ENCODE measurements at regions of chr22 and their contacts with region 1.

Region 1: DNA sequence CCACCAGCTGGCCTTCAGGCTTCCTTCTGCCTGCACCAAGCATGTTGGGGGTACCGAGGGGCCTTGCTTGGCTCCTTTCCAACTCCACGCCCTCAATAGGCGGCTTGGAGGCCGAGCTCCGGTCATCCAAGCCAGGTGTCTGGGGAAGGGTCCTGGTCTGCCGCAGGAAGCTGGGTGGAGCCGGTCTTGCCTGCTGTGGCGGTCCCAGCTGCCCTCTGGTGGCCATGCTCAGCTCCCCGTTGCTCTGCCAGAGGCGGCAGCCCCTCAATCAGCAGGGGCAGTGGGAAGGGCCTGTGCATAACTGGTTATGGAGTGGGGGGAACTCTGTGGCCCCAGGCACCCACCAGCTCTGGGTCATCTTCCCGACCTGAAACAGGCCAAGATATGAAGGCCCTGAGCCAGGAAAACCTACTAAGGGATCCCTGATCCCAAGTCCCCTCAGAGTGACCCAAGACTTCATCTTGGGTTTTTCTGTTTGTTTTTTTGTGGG is 3.2 kb downstream of the ARVCF start:
- H3K4me3 ChIP-seq: no peak overlapping the region
- H3K27ac ChIP-seq: no peak overlapping the region
- H3K4me1 ChIP-seq: no peaks in the 10 kb centered on the region
- CTCF ChIP-seq: peak; percentile 86

Region 2: DNA sequence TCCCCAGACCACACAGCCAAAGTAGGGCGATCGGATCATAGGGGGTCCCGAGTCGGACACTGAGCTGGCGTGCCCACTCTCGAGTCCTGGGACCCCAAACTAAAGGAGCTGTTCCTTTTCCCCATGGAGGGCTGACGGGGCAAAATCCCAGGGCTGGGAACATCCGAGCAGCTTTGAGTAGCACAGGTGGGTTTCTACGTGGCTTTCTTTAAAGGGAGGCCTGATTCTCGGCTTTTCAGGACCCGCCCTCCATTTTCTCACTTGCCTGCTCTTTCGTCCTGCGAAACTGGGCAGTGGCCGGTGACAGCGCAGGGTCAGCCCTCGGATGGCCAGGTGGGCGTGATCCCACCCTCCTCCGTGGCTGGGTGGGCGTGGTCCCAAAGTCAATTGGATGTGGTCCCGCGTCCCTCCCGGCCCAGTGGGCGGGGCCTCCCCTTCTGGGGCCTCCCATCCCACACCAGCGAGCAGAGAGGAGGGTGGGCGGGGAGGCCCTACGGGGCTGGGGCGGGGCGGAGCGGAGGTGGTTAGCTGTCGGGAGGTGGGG is 54.3 kb before region 1 on chr22:
- CTCF ChIA-PET with region 1: interaction called, 150 read pairs
- POLR2A ChIA-PET with region 1: no interaction called
- H3K4me3 ChIP-seq: peak overlapping the region; percentile 33
- H3K27ac ChIP-seq: no peak overlapping the region
- H3K4me1 ChIP-seq: peaks cover 6% of the 10 kb centered on the region; the same call in 1 of the 2 replicates
- CTCF ChIP-seq: no peak

Region 3: DNA sequence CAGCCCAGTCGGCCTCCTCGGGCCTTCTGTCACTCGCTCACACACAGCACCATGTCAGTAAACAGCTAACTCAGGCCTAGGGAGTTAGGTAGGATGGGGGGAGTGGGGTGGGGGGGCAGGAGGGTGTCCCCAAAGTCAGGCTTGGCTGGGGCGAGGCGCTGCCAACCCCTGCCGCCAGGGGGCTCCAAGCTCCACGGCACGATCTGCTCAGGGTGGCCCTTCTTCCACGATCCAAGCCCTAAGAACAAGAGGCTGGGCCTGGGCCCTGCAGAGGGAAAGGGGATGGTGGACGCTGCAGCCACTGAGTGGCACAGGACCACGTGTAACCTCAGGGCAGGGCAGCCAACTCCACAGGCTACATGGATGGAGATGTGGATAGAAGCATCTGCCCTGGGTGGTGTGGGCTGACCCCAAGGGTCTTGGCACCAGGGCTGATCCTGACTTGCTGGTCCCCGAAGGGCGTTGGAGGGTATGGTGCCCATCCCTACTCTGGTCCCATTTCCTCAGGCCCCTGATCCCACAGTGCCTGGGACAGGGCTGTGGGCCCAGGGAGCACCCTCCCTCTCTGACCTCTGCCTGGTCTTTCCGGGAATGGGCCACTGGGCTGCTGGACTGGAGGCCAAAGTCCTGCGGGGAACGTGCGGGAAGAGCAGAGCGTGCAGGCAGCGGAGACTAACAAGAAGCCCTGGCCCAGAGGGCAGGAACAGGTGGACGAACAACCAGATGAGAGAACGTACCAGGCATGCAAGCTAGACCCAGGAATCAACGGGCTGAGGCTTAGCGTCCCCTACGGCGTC is 42.8 kb before region 1 on chr22:
- CTCF ChIA-PET with region 1: interaction called, 150 read pairs
- POLR2A ChIA-PET with region 1: interaction called, 26 read pairs
- H3K4me3 ChIP-seq: no peak overlapping the region
- H3K27ac ChIP-seq: no peak overlapping the region
- H3K4me1 ChIP-seq: no peaks in the 10 kb centered on the region
- CTCF ChIP-seq: peak; percentile 86

Region 4: DNA sequence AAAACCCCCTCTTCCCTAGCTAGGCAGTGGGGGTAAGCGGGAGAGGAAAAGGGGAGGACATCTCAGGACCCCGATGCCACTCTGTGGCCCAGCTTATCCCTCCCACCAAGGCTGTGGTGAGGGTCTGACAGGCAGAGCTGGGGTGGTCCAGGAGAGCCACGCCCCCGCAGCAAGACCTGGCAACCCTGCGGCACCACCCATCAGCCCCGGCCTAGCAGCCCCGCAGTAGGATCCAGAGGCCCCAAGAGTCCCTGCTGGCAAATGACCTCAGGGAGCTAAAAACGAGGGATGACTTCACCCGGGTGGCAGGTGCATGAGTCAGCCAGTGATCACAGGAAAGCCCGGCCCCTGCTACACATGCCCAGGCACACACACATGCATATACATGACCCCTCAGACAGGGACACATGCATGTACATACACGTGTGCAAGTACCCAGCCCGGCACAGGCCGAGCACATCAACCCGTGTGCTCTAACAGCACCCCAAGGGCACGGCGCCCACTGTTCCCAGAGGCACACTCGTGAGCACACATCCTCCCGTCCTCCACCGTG is 29.1 kb before region 1 on chr22:
- CTCF ChIA-PET with region 1: interaction called, 13 read pairs
- POLR2A ChIA-PET with region 1: interaction called, 5 read pairs
- H3K4me3 ChIP-seq: no peak overlapping the region
- H3K27ac ChIP-seq: peak overlapping the region; percentile 42
- H3K4me1 ChIP-seq: peaks cover 14% of the 10 kb centered on the region
- CTCF ChIP-seq: no peak

Region 5: GRCh38 chr22:20000624-20001314 is 12.7 kb before region 1 on chr22:
- CTCF ChIA-PET with region 1: interaction called, 11 read pairs
- POLR2A ChIA-PET with region 1: no interaction called
- H3K4me3 ChIP-seq: no peak overlapping the region
- H3K27ac ChIP-seq: no peak overlapping the region
- H3K4me1 ChIP-seq: no peaks in the 10 kb centered on the region
- CTCF ChIP-seq: no peak

Measured in HEK293 (cell line).